ENCODE measurements at regions of chr4 and their contacts with region 1.

Region 1: DNA sequence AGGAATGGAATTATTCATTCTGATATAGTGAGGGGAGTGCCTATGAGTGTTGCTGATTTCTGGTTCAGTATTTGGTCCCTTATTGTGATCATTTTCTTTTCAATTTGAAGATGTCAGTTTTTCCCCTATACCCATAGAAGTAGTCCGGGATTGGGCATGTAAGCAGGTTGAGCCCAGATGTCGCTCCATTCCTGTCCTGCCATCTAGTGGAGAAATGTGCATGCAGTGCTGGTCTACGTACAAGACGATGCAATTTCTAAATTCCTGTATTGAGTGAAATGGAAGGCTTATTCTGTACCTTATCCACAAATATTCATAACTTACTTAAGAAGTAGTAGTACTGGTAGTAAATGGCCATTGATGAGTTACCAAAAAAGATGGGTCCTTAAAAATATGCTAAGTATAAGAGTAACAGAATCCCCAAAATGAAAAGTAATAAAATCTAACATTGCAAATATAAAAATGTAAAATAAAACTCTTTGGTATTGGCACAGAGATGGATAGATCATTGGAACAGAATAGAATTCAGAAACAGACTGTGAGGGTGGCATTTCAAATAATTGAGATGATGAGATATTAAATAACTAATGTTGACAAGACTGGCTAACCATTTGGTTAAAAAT is 60.9 kb downstream of the UGT8 start:
- DNase-seq: peak; percentile 44
- CTCF ChIP-seq: peak; percentile 77

Region 2: GRCh38 chr4:113524096-113524495 is 1135.4 kb before region 1 on chr4:
- in situ Hi-C with region 1: no loop called
- DNase-seq: peak; percentile 36
- CTCF ChIP-seq: no peak

Region 3: GRCh38 chr4:114399105-114399504 is 260.4 kb before region 1 on chr4:
- in situ Hi-C with region 1: loop called (anchors 10 kb)
- DNase-seq: no peak
- CTCF ChIP-seq: no peak

Region 4: DNA sequence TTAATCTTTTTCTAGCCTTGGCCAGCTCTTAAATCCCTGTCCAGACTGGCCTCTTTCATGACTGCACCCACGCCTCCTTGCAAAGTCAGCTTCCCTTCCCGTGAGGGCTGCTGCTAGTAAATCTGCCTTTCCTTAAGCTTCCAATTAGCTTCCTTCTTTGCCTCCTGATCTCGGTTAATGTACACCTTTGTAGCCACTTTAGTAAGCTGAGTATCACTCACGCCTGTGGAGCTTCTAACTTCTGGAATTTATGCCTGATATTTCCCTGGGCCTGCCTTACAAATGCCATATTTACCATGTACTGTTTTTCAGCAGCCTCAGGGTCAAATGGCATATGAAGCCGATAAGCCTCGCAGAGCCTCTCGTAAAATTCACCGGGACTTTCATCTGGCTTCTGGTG is 66.0 kb before region 1 on chr4:
- in situ Hi-C with region 1: no loop called
- DNase-seq: no peak
- CTCF ChIP-seq: no peak